PC-3 (cell line): ENCODE measurements at regions of chr11 and their contacts with region 1.

Region 1: GRCh38 chr11:46121724-46122477 is 647 bp upstream of the PHF21A start:
- DNase-seq: peak; percentile 75
- ATAC-seq: peak; percentile 40
- H3K4me3 ChIP-seq: peak overlapping the region; percentile 92
- H3K27ac ChIP-seq: peak overlapping the region; percentile 34; the same call in 1 of the 2 replicates
- H3K4me1 ChIP-seq: peaks cover 11% of the 10 kb centered on the region
- H3K27me3 ChIP-seq: no peaks in the 10 kb centered on the region
- CTCF ChIP-seq: no peak

Region 2: DNA sequence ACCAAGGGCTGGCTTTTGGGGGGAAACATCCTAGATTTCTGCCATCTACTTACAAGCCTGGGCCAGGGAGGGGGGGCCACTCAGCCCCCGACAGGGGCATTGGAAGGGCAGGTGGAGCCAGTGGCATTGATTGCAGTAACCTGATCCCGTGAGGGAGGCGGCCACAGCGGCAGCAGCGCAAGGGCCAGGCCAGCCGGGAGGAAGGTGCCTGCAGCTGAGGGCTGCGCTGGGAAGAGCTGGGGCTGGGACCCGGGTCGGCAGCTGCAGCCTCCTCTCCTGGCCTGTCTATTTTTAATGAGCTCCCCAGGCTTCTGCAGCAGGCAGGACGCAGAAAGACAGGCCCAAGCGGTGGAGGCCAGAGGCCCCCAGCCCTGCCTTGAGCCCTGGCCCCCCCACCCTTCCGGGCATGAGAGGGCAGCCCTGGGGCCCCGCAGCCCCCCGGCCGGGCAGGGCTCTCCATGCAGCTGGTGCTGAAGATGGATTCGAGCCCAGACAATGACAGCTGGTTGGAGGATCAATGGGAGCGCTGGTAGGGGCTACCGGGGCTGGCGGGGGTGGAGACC is 225.4 kb before region 1 on chr11:
- CTCF ChIA-PET with region 1: no interaction called
- POLR2A ChIA-PET with region 1: no interaction called
- intact Hi-C with region 1: no loop called
- DNase-seq: no peak
- ATAC-seq: no peak
- H3K4me3 ChIP-seq: no peak overlapping the region
- H3K27ac ChIP-seq: no peak overlapping the region
- H3K4me1 ChIP-seq: 0 out of 2 replicates have a peak, but pooled peaks cover 7% of the 10 kb centered on the region
- H3K27me3 ChIP-seq: no peaks in the 10 kb centered on the region
- CTCF ChIP-seq: no peak

Region 3: DNA sequence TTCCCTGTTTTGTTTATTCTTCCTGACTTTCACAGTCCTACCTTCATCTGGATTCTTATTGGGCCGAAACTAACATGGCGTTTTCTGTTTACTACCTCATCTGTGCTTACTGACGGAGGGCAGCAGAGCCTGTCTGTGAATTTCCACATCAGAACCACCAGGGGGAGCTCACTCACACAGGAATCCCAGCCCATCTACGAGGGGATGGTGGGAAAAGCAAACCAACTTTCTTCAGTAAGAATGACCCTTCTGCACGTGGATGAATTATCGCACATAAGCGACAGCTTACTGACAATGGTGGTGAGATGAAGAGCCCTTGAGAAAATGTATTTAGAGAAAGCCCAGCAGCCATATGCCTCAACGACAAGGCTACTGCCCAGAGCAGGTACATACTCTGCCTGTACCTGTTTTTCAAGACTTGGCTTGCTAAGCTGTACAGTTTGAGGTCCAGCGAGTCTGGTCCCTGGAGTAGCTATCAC is 157.0 kb before region 1 on chr11:
- CTCF ChIA-PET with region 1: no interaction called
- POLR2A ChIA-PET with region 1: no interaction called
- intact Hi-C with region 1: loop called (anchors 5 kb)
- DNase-seq: peak; percentile 76
- ATAC-seq: peak; percentile 93
- H3K4me3 ChIP-seq: no peak overlapping the region; the same call in 1 of the 2 replicates
- H3K27ac ChIP-seq: no peak overlapping the region
- H3K4me1 ChIP-seq: no peaks in the 10 kb centered on the region
- H3K27me3 ChIP-seq: no peaks in the 10 kb centered on the region
- CTCF ChIP-seq: peak; percentile 90

Region 4: GRCh38 chr11:46075168-46075567 is 46.7 kb before region 1 on chr11:
- CTCF ChIA-PET with region 1: no interaction called
- POLR2A ChIA-PET with region 1: no interaction called
- intact Hi-C with region 1: no loop called
- DNase-seq: peak; percentile 65
- ATAC-seq: peak; percentile 84
- H3K4me3 ChIP-seq: no peak overlapping the region
- H3K27ac ChIP-seq: no peak overlapping the region
- H3K4me1 ChIP-seq: peaks cover 8% of the 10 kb centered on the region
- H3K27me3 ChIP-seq: no peaks in the 10 kb centered on the region
- CTCF ChIP-seq: no peak

Region 5: GRCh38 chr11:46106530-46107407 is 15.1 kb before region 1 on chr11:
- CTCF ChIA-PET with region 1: no interaction called
- POLR2A ChIA-PET with region 1: no interaction called
- intact Hi-C with region 1: no loop called
- DNase-seq: no peak
- ATAC-seq: no peak
- H3K4me3 ChIP-seq: no peak overlapping the region
- H3K27ac ChIP-seq: no peak overlapping the region
- H3K4me1 ChIP-seq: no peaks in the 10 kb centered on the region
- H3K27me3 ChIP-seq: no peaks in the 10 kb centered on the region
- CTCF ChIP-seq: no peak

Region 6: GRCh38 chr11:46144741-46145140 is 22.8 kb after region 1 on chr11:
- CTCF ChIA-PET with region 1: no interaction called
- POLR2A ChIA-PET with region 1: no interaction called
- intact Hi-C with region 1: no loop called
- DNase-seq: no peak
- ATAC-seq: no peak
- H3K4me3 ChIP-seq: no peak overlapping the region
- H3K27ac ChIP-seq: no peak overlapping the region
- H3K4me1 ChIP-seq: no peaks in the 10 kb centered on the region
- H3K27me3 ChIP-seq: no peaks in the 10 kb centered on the region
- CTCF ChIP-seq: no peak

Region 7: DNA sequence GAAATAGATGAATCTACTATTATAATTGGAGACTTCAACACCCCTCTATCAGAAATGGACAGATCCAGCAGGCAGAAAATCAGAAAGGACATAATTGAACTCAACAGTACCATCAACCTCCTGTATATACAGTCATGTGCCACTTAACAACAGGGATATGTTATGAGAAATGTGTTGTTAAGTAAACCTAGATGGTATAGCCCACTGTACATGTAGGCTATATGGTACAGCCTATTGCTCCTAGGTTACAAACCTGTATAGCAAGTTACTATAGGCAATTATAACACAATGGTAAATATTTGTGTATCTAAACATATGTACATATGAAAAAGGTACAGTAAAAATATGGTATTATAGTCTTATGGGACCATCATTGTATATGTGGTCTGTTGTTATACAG is 66.1 kb after region 1 on chr11:
- CTCF ChIA-PET with region 1: no interaction called
- POLR2A ChIA-PET with region 1: interaction called, 12 read pairs
- intact Hi-C with region 1: no loop called
- DNase-seq: no peak
- ATAC-seq: no peak
- H3K4me3 ChIP-seq: no peak overlapping the region
- H3K27ac ChIP-seq: no peak overlapping the region
- H3K4me1 ChIP-seq: peaks cover 18% of the 10 kb centered on the region
- H3K27me3 ChIP-seq: no peaks in the 10 kb centered on the region
- CTCF ChIP-seq: no peak

Region 8: DNA sequence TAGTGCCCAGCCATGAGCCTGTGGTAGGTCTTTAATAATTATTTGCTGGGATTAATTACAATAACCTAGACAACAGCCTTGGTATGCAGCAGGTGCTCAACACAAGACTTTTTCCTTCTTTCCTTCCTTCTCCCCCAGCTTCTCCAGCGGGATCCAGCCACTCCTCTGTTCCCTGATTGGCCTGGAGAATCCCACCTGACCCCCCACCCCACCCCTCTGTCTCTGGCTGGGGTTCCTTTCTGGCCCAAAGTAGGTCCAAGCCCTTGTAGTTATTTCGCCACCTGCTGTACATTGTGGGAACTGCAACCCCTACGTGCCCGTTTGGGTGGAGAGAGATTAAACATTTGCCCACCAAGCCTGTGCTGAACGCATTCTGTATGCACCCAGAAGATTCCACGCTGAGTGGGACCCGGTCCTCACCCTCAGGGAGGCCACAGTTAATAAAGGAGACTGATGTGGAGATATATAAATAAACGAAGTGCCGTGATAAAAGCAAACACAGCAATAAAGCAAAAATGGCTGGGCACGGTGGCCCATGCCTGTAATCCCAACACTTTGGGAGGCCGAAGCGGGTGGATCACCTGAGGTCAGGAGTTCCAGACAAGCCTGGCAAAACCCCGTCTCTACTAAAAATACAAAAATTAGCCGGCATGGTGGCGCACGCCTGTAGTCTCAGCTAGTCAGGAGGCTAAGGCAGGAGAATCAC is 193.3 kb after region 1 on chr11:
- CTCF ChIA-PET with region 1: no interaction called
- POLR2A ChIA-PET with region 1: interaction called, 5 read pairs
- intact Hi-C with region 1: loop called (anchors 10 kb)
- DNase-seq: peak; percentile 89
- ATAC-seq: peak; percentile 89
- H3K4me3 ChIP-seq: no peak overlapping the region
- H3K27ac ChIP-seq: no peak overlapping the region
- H3K4me1 ChIP-seq: no peaks in the 10 kb centered on the region
- H3K27me3 ChIP-seq: no peaks in the 10 kb centered on the region
- CTCF ChIP-seq: peak; percentile 91